Naive thymus-derived CD4-positive, alpha-beta T cell (primary cell): ENCODE measurements at regions of chr18 and their contacts with region 1.

Region 1: DNA sequence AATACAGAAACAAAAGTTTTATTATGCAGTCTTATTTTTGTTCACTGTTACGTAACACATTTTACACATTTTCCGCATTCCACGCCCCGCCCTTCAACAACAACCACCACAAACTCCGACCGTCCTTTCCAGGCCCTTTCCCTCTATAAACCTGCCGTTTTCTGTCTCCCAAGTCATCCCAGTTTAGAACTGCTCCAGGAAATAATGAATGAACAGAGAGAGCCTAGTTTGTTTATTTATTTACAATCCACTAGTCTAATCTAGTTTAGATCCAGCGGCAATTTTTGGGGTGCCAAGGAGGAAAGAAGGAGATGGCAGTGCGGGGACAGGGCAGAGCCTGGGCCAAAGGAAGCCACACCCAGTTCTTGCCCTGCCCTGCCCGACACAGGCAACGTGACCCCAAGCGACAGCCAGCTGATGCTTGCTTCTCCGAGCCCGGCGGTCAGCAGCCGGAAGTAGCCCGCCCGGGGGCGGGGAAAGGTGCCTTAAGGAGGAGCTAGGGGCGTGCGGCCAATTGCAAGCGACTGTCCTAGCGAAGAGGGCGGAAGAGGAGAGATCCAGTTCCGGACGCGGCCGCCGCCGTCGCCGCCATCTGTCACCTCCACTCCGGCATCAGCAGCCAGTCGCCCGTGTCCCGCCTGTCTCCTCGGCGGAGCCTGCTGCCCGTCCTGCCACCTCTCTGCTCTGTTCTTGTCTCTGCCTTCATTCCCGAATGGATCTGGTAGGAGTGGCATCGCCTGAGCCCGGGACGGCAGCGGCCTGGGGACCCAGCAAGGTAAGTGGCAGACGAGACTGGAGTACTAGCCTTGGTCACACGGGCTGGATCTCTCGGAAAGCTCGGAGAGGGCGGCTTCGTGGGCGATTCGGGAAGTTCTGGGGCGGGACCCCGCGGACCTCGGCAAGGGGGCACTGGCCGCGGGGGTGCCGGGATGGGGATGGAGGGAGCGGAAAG is at the start of gene RIOK3:
- DNase-seq: peak; percentile 68 to 96 (median 74)
- ATAC-seq: peak; percentile 97
- H3K4me3 ChIP-seq: peak within 1 kb of the TSS; percentile 82
- H3K4me3 Mint-ChIP-seq: peak within 1 kb of the TSS; percentile 92 to 100 (median 98)
- H3K27ac ChIP-seq: peak within 1 kb of the TSS; percentile 90
- H3K27ac Mint-ChIP-seq: peak within 1 kb of the TSS; percentile 91 to 99 (median 96)
- H3K4me1 ChIP-seq: peaks cover 13 to 25% of the 10 kb centered on the region in 2 donors
- H3K4me1 Mint-ChIP-seq: peaks cover 22 to 55% (median 47%) of the 10 kb centered on the region in 7 donors
- H3K27me3 ChIP-seq: no peaks in the 10 kb centered on the region
- H3K27me3 Mint-ChIP-seq: peaks cover 0 to 7% (median 0%) of the 10 kb centered on the region in 5 donors
- total RNA-seq, gene RIOK3: 74.0 to 153 (median 78.2) TPM

Region 2: DNA sequence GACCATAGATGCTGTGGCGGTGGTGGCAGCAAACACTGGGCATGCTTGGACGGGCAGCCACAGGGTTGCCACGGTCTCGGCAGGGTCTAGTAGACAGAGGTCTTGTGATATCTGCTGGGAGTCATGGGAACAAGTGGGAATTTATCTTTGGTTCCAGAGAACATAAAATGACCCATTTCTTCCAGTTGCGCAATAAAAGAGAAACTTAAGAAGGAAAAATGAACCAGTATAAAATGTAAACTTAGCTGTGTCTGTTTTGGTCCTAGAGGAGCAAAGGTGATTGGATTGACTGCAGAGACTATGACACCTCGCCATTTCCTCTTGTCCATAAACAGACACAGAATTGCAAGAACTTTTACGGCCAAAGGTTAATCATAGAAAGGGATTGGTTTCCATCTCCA is 652.5 kb before region 1 on chr18:
- CTCF ChIA-PET with region 1: no interaction called
- POLR2A ChIA-PET with region 1: no interaction called
- intact Hi-C with region 1: no loop called
- DNase-seq: no peak
- ATAC-seq: no peak
- H3K4me3 ChIP-seq: no peak overlapping the region
- H3K4me3 Mint-ChIP-seq: no peak overlapping the region
- H3K27ac ChIP-seq: no peak overlapping the region
- H3K27ac Mint-ChIP-seq: no peak overlapping the region
- H3K4me1 ChIP-seq: no peaks in the 10 kb centered on the region
- H3K4me1 Mint-ChIP-seq: no peaks in the 10 kb centered on the region
- H3K27me3 ChIP-seq: no peaks in the 10 kb centered on the region
- H3K27me3 Mint-ChIP-seq: peaks cover 0 to 19% (median 0%) of the 10 kb centered on the region in 5 donors

Region 3: DNA sequence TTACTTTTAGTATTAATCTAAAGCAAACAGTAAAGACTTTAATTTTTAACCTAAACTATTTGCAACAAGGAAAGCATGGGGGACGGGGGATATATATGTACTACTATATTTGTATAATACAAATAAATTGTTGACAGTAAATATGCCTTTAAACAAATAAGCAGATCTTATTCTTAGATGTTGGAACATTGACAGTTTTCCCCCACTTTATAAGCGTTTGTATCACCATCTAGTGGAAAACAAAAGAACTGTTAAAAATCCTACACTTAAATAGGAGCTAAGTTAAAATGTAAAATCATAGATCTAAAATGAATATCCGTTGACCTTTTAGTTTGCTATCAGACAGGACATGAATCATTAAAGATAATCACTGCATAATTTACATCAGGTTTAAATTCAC is 469.8 kb before region 1 on chr18:
- CTCF ChIA-PET with region 1: no interaction called
- POLR2A ChIA-PET with region 1: no interaction called
- intact Hi-C with region 1: no loop called
- DNase-seq: peak in 6 of 9 donors; percentile 8 to 27 (median 21)
- ATAC-seq: peak; percentile 40
- H3K4me3 ChIP-seq: no peak overlapping the region
- H3K4me3 Mint-ChIP-seq: no peak overlapping the region
- H3K27ac ChIP-seq: no peak overlapping the region
- H3K27ac Mint-ChIP-seq: no peak overlapping the region
- H3K4me1 ChIP-seq: no peaks in the 10 kb centered on the region
- H3K4me1 Mint-ChIP-seq: peaks cover 0 to 8% (median 0%) of the 10 kb centered on the region in 7 donors
- H3K27me3 ChIP-seq: no peaks in the 10 kb centered on the region
- H3K27me3 Mint-ChIP-seq: no peaks in the 10 kb centered on the region

Region 4: DNA sequence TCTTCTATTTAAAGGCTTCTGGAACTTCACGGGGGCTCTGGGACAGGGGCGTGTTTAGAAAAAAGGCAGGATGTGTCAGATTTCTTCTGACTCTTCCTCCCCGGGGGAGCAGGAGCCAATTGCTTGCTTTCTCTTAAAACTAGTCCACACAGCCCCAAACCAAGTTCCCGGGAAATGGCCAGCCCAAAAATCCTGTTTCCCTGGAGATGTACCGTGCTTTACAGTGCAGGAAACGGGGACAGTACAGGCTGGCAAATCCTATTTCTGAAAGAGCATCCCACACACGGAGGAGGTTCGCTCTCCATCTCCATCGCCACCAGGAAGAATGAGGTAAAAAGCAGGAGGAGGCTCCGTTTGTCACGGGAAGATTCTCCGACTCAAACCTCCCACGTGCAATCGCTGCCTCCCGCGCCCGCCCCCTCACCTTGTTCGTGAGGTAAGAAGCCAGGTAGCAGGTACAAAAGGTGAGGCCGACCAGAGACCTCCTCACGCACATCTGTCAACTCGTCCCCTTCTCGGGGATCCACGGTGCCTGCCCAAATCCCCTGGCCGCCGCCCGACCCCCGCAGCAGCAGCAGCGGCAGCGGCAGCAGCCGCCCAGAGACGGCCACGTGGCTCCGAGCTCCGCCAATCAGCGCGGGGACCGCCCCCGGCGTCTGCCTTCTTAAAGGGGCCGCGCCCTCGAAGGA is 15.5 kb before region 1 on chr18:
- CTCF ChIA-PET with region 1: no interaction called
- POLR2A ChIA-PET with region 1: interaction called, 3 read pairs
- intact Hi-C with region 1: loop called (anchors 1 kb)
- DNase-seq: peak; percentile 52 to 83 (median 71)
- ATAC-seq: peak; percentile 99
- H3K4me3 ChIP-seq: peak overlapping the region; percentile 84
- H3K4me3 Mint-ChIP-seq: peak overlapping the region; percentile 87 to 93 (median 90)
- H3K27ac ChIP-seq: peak overlapping the region; percentile 57
- H3K27ac Mint-ChIP-seq: peak overlapping the region in 7 of 9 donors; percentile 47 to 82 (median 77)
- H3K4me1 ChIP-seq: peaks cover 0 to 7% of the 10 kb centered on the region in 2 donors
- H3K4me1 Mint-ChIP-seq: peaks cover 8 to 26% (median 19%) of the 10 kb centered on the region in 7 donors
- H3K27me3 ChIP-seq: no peaks in the 10 kb centered on the region
- H3K27me3 Mint-ChIP-seq: peaks cover 0 to 2% (median 0%) of the 10 kb centered on the region in 5 donors

Region 5: GRCh38 chr18:23487738-23488570 is 35.0 kb after region 1 on chr18:
- CTCF ChIA-PET with region 1: no interaction called
- POLR2A ChIA-PET with region 1: interaction called, 11 read pairs
- intact Hi-C with region 1: loop called (anchors 2 to 5 kb)
- DNase-seq: peak in 8 of 9 donors; percentile 32 to 62 (median 46)
- ATAC-seq: peak; percentile 75
- H3K4me3 ChIP-seq: peak overlapping the region; percentile 46
- H3K4me3 Mint-ChIP-seq: peak overlapping the region; percentile 69 to 90 (median 78)
- H3K27ac ChIP-seq: peak overlapping the region; percentile 67
- H3K27ac Mint-ChIP-seq: peak overlapping the region; percentile 78 to 93 (median 92)
- H3K4me1 ChIP-seq: no peaks in the 10 kb centered on the region
- H3K4me1 Mint-ChIP-seq: peaks cover 6 to 29% (median 24%) of the 10 kb centered on the region in 7 donors
- H3K27me3 ChIP-seq: no peaks in the 10 kb centered on the region
- H3K27me3 Mint-ChIP-seq: no peaks in the 10 kb centered on the region

Region 6: GRCh38 chr18:23545247-23545789 is 92.3 kb after region 1 on chr18:
- CTCF ChIA-PET with region 1: no interaction called
- POLR2A ChIA-PET with region 1: no interaction called
- intact Hi-C with region 1: no loop called
- DNase-seq: no peak
- ATAC-seq: no peak
- H3K4me3 ChIP-seq: no peak overlapping the region
- H3K4me3 Mint-ChIP-seq: no peak overlapping the region
- H3K27ac ChIP-seq: no peak overlapping the region
- H3K27ac Mint-ChIP-seq: peak overlapping the region in 1 of 9 donors; percentile 26
- H3K4me1 ChIP-seq: peaks cover 11 to 24% of the 10 kb centered on the region in 2 donors
- H3K4me1 Mint-ChIP-seq: peaks cover 18 to 30% (median 25%) of the 10 kb centered on the region in 7 donors
- H3K27me3 ChIP-seq: no peaks in the 10 kb centered on the region
- H3K27me3 Mint-ChIP-seq: no peaks in the 10 kb centered on the region